ENCODE measurements at regions of chr22 and their contacts with region 1.

Region 1: GRCh38 chr22:30920407-30920806 is 48.2 kb downstream of the MORC2 start:
- DNase-seq: peak; percentile 74
- H3K4me3 Mint-ChIP-seq: peak overlapping the region; percentile 82
- H3K27ac Mint-ChIP-seq: no peak overlapping the region
- H3K4me1 Mint-ChIP-seq: peaks cover 15% of the 10 kb centered on the region
- H3K27me3 Mint-ChIP-seq: no peaks in the 10 kb centered on the region

Region 2: GRCh38 chr22:30763815-30764686 is 156.4 kb before region 1 on chr22:
- intact Hi-C with region 1: loop called (anchors 1 kb)
- DNase-seq: peak; percentile 36
- H3K4me3 Mint-ChIP-seq: no peak overlapping the region
- H3K27ac Mint-ChIP-seq: no peak overlapping the region
- H3K4me1 Mint-ChIP-seq: peaks cover 2% of the 10 kb centered on the region
- H3K27me3 Mint-ChIP-seq: peaks cover 2% of the 10 kb centered on the region

Region 3: GRCh38 chr22:30968924-30969539 is 48.6 kb after region 1 on chr22 and contains the start of gene TUG1:
- intact Hi-C with region 1: loop called (anchors 2 kb)
- DNase-seq: peak; percentile 97
- H3K4me3 Mint-ChIP-seq: peak within 1 kb of the TSS; percentile 86
- H3K27ac Mint-ChIP-seq: peak within 1 kb of the TSS; percentile 93
- H3K4me1 Mint-ChIP-seq: peaks cover 25% of the 10 kb centered on the region
- H3K27me3 Mint-ChIP-seq: no peaks in the 10 kb centered on the region
- total RNA-seq, gene TUG1: 66.9 and 68.2 TPM in 2 replicates